ENCODE measurements at regions of chr4 and their contacts with region 1.

Region 1: DNA sequence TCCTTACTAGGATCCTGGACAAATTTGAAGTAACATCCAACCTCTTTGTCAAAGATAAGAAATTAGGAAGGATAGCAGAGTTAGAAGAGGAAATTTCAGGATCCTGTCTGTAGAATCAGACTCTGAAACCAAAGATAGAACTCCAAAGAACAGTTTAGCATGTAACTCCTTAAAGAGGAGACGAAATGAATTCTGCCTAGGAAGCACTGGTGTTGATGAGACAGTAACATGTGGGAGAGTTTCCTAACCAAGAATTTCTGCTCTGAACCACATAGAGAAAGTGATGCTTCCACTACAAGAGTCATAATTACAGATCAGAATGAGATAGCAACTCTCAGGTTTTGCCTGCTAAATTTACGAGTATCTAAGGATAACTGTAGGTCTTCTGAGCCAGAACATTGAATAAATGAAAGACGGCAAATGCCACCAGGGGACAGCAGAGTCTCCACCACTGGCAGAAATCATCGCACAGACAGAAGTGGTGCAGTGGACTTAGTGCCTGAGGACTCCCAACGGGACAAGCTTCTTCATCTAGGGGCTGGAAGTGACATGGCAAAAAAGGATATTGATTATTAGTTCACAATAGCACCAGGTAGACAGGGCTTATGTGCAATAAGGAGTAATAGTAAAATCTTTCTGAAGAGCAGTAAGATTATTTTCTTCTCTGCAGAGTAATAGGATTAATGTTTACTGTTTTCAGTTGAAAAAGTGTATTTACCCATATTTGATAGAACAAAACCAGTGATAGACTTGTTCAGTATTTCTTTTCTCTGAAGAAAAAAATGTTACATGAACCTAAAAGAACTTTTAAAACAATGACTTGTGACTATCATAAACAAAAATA is 6.7 kb upstream of the PPID start:
- DNase-seq: peak in 1 of 2 experiments; percentile 43
- H3K4me3 ChIP-seq: no peak overlapping the region
- H3K27ac ChIP-seq: no peak overlapping the region
- H3K4me1 ChIP-seq: no peaks in the 10 kb centered on the region
- H3K27me3 ChIP-seq: no peaks in the 10 kb centered on the region
- CTCF ChIP-seq: peak; percentile 64

Region 2: GRCh38 chr4:158850800-158851644 is 121.1 kb after region 1 on chr4:
- CTCF ChIA-PET with region 1: interaction called, 3 read pairs
- POLR2A ChIA-PET with region 1: no interaction called
- intact Hi-C with region 1: loop called (anchors 1 kb)
- DNase-seq: no peak
- H3K4me3 ChIP-seq: no peak overlapping the region
- H3K27ac ChIP-seq: no peak overlapping the region
- H3K4me1 ChIP-seq: no peaks in the 10 kb centered on the region
- H3K27me3 ChIP-seq: no peaks in the 10 kb centered on the region
- CTCF ChIP-seq: peak; percentile 78

Region 3: DNA sequence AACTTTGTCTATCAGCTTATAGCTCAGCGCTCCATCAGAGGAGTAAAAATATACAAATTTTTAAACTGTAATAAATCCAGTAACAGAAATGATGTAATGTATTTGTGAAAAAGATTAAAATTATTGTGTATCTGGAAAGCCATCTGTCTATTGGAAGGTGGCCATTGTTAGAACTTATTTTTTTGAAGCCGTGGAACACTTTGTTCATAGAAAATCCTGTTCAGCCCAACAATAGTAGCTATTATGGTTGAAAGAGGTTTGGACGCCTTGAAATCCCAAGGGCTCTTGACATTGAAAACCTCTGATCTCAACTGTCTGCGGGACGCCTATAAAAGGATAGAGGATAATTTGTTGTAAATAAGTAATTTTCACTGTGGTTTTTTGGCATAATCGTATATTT is 471.2 kb after region 1 on chr4:
- CTCF ChIA-PET with region 1: no interaction called
- POLR2A ChIA-PET with region 1: no interaction called
- intact Hi-C with region 1: loop called (anchors 5 kb)
- DNase-seq: no peak
- H3K4me3 ChIP-seq: no peak overlapping the region
- H3K27ac ChIP-seq: no peak overlapping the region
- H3K4me1 ChIP-seq: no peaks in the 10 kb centered on the region
- H3K27me3 ChIP-seq: no peaks in the 10 kb centered on the region
- CTCF ChIP-seq: no peak

Region 4: DNA sequence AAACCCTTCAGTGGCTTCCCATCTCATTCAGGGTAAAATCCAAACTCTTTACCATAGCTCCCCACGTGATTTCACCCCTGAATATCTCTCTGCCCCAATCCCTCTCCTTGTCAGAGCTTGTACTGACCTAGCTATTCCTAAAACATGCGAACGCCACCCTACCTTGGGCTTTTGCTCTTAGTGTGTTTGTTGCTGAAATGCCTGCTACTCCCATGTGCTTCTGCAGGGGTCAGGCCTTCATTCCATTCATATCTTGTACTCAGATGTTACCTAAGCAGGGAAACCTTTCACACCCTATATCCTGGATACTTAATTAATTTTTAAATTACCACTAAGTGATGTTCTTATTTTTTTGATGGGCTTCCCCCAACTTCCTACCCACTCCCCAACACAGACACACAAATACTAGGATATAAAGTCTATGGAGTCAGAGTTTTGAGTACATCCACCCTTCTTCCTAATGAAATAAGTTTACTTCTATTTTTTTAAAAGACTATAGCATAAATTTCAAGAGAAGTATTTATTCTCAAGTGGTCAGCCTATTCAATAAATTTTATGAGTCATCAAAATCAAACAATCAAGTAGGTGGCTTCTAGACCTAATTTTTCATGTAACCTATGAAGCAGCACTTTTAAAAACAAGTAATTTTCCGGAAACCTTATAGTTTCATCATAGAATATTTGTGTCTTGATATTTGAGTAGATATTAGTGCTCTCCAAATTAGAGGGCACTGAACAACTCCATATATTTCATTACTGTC is 562.4 kb after region 1 on chr4:
- CTCF ChIA-PET with region 1: interaction called, 12 read pairs
- POLR2A ChIA-PET with region 1: no interaction called
- intact Hi-C with region 1: no loop called
- DNase-seq: no peak
- H3K4me3 ChIP-seq: no peak overlapping the region
- H3K27ac ChIP-seq: no peak overlapping the region
- H3K4me1 ChIP-seq: peaks cover 24% of the 10 kb centered on the region
- H3K27me3 ChIP-seq: no peaks in the 10 kb centered on the region
- CTCF ChIP-seq: no peak

Region 5: DNA sequence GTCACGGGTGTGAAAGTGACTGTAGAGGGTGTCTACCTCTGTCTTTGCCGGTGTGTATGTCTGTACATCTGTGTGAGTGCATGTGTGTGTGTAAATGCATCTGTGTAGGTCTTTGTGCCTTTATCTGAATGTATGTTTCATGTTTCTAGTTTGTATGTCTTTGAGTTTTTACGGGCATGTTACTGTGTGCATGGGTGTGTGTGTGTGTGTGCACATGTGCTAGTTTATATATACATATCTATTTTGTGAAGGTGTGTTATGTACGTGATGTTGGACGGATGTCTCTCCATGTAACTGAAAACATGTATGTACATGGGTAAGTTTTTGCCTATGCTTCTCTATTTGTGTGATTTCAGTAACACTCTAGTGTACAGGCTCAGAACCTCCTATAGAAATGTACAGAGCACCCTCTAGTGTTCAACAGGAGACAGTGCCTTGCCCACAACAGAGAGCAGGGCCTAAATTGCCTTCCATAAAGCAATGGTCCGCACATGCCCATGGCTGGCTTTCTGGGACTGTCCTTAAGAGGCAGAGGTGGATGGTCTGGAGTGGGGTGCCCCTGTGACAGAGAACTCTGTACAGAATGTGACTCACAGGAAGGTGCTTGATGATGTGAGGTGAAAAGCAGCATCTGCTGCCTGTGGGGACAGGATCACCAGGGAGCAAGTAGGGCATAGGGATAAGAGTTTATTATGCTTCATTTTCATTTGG is 716.5 kb after region 1 on chr4:
- CTCF ChIA-PET with region 1: no interaction called
- POLR2A ChIA-PET with region 1: no interaction called
- intact Hi-C with region 1: loop called (anchors 2 kb)
- DNase-seq: peak; percentile 39 to 49
- H3K4me3 ChIP-seq: no peak overlapping the region
- H3K27ac ChIP-seq: no peak overlapping the region
- H3K4me1 ChIP-seq: no peaks in the 10 kb centered on the region
- H3K27me3 ChIP-seq: no peaks in the 10 kb centered on the region
- CTCF ChIP-seq: peak; percentile 82